ENCODE measurements at regions of chr4 and their contacts with region 1.

Region 1: DNA sequence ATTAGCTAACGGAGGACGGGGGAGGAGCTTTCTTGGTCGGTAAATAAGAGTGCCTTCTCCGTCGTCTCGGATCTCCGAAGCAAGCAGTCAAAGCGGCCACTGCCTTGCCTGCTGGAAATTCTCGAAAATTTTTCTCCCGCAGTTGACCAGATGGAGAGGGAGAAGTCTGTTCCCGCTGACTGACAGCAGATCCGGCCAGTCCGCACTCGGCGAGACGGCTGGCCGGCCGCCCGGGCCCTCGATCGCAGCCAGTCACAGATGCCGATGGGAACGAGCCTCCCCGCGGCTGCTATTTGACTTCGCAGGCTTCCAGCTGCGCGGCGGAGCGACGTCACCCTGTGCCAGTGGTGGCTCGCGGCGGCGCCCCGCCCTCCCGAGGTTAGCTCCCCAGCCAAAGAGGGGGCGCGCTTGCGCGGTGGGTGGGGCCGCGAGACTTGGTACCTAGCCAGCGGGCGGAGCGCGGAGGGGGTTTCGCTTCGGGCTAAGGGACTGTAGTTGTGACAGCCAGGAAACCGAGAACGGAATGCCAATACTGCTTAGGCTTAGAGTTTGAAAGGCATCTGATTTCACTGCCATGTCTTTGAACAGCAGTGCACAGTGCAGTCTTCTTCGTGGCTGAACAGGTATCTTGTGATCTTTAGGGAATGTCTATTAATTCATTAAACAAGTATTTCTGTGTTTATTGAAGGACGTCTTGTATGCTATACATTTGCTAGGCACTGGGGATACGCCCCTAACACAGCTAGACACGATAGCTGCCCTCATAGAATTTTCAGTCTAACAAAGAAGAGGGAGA is at the start of gene PPM1K:
- DNase-seq: peak; percentile 93
- ATAC-seq: peak; percentile 88
- H3K4me3 ChIP-seq: peak within 1 kb of the TSS; percentile 73
- H3K27ac ChIP-seq: peak within 1 kb of the TSS; percentile 98
- H3K4me1 ChIP-seq: 0 out of 2 replicates have a peak, but pooled peaks cover 5% of the 10 kb centered on the region
- H3K27me3 ChIP-seq: no peaks in the 10 kb centered on the region
- CTCF ChIP-seq: no peak
- EP300 ChIP-seq: 0 out of 4 replicates have a peak, but pooled peaks of 1 of the 2 experiments have one; percentile 4
- POLR2A ChIP-seq: no peak; the same call in none of the 2 replicates
- RAD21 ChIP-seq: no peak
- polyA plus RNA-seq, gene PPM1K: 25.3 to 25.4 TPM

Region 2: DNA sequence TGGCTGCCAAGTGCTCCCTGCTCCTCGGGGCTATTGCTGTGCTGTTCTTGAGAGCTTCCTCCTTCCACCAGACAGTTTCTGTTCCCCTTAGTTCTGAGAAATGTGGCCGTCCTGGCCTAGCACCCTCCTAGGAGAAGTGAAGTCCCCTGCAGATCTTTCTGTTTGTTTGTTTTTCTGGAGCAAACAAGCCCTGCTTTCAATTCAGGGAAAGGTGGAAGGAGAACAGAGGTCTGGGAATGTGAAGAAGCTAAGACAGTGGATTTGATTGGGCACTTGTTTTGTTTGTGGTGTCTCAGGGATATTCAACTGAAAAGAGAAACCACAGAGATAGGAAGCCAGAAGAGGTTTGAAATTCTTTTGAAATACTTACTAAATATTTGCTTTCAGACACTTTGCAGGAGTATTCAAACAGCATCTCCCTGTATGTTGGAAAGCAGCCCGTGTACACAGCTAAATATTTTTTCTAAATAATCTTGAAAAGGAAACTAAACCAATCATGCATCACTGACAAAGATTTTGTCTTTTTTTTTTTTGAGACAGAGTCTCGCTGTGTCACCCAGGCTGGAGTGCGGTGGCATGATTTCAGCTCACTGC is 36.2 kb after region 1 on chr4:
- CTCF ChIA-PET with region 1: interaction called, 4 read pairs
- POLR2A ChIA-PET with region 1: interaction called, 40 read pairs
- RAD21 ChIA-PET with region 1: interaction called, 42 read pairs
- SMC1A ChIA-PET with region 1: interaction called, 112 read pairs
- in situ Hi-C with region 1: no loop called
- intact Hi-C with region 1: loop called (anchors 1 kb)
- DNase-seq: peak; percentile 83
- ATAC-seq: peak; percentile 100
- H3K4me3 ChIP-seq: peak overlapping the region; percentile 53
- H3K27ac ChIP-seq: peak overlapping the region; percentile 93
- H3K4me1 ChIP-seq: peaks cover 17% of the 10 kb centered on the region
- H3K27me3 ChIP-seq: no peaks in the 10 kb centered on the region
- CTCF ChIP-seq: no peak
- EP300 ChIP-seq: peak in 1 of 2 experiments; percentile 80; a peak in 2 of 4 replicates
- POLR2A ChIP-seq: peak; percentile 49
- RAD21 ChIP-seq: no peak

Region 3: DNA sequence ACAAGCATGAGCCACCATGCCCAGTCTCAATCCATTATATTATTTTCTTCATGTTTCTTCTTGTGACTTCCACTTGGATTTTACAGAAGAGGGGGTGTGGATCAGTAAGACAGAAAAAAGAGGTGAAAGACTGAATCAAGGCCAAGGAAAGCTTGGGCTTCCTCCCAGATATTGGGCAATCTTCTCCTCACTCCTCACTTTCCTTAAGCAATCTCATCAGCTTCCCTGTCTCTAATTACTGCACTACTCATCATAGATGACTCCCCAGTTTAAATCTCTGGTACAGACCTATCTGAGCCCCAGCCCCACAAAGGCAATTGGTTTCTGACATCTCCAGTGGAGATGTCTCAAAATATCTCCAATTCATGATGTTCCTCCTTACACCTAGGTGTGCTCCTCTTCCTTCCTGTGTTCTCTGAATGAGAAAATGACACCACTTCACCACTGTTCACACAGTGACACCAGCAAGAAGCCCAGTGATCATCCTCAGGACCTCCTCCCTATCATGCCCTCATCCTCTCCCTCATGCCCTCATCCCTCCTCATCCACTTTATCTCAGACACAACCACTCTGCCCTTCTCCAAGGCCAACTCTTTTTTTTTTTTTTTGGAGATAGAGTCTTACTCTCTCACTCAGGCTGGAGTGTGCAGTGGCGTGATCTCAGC is 49.2 kb after region 1 on chr4:
- CTCF ChIA-PET with region 1: no interaction called
- POLR2A ChIA-PET with region 1: no interaction called
- RAD21 ChIA-PET with region 1: no interaction called
- SMC1A ChIA-PET with region 1: no interaction called
- in situ Hi-C with region 1: no loop called
- intact Hi-C with region 1: no loop called
- DNase-seq: no peak
- ATAC-seq: no peak
- H3K4me3 ChIP-seq: no peak overlapping the region
- H3K27ac ChIP-seq: no peak overlapping the region
- H3K4me1 ChIP-seq: no peaks in the 10 kb centered on the region
- H3K27me3 ChIP-seq: no peaks in the 10 kb centered on the region
- CTCF ChIP-seq: no peak
- EP300 ChIP-seq: no peak
- POLR2A ChIP-seq: no peak
- RAD21 ChIP-seq: no peak

Region 4: DNA sequence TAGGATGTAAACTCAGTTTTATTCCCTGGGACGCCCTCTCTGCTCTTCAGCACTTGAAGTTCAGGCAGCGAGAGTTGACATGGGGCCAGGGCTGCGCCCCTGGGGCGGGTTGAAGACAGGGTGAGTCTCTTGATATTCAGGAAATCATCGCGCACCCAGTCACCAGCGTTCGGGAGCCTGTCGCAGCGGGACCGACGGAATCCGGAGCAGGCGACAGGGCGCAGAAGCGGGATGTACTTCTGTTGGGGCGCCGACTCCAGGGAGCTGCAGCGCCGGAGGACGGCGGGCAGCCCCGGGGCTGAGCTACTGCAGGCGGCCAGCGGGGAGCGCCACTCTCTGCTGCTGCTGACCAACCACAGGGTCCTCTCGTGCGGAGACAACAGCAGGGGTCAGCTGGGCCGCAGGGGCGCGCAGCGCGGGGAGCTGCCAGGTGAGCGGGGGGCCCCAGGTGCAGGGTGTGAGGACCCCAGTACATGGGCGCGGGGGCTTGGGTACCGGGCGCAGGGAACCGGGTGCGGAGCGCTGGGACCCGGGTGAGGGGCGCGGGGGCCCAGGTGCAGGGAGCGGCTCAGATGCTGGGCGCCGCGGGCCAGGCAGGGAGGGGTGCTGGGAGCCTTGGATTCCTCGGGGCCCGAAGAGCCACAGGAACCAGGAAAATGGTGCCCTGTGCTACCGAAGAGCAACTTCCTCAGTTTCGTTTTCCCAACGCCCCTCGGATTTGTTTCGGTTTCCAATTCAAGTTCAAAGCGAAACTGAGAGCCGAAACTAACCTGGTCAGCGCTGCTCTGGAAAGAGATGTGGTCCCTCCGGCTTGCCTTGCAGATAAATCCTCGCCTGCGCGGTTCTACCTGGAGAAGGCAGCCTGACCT is 94.3 kb after region 1 on chr4 and contains the start of gene HERC6:
- CTCF ChIA-PET with region 1: interaction called, 9 read pairs
- POLR2A ChIA-PET with region 1: interaction called, 5 read pairs
- RAD21 ChIA-PET with region 1: interaction called, 6 read pairs
- SMC1A ChIA-PET with region 1: interaction called, 6 read pairs
- in situ Hi-C with region 1: no loop called
- intact Hi-C with region 1: loop called (anchors 1 kb)
- DNase-seq: peak; percentile 84
- ATAC-seq: peak; percentile 85
- H3K4me3 ChIP-seq: peak within 1 kb of the TSS; percentile 75
- H3K27ac ChIP-seq: peak within 1 kb of the TSS; percentile 82
- H3K4me1 ChIP-seq: peaks cover 24% of the 10 kb centered on the region
- H3K27me3 ChIP-seq: no peaks in the 10 kb centered on the region
- CTCF ChIP-seq: peak; percentile 69 to 83 (median 70)
- EP300 ChIP-seq: 0 out of 4 replicates have a peak, but pooled peaks of 1 of the 2 experiments have one; percentile 56
- POLR2A ChIP-seq: peak; percentile 78
- RAD21 ChIP-seq: peak; percentile 57
- polyA plus RNA-seq, gene HERC6: 1.7 to 2.2 TPM

Region 5: DNA sequence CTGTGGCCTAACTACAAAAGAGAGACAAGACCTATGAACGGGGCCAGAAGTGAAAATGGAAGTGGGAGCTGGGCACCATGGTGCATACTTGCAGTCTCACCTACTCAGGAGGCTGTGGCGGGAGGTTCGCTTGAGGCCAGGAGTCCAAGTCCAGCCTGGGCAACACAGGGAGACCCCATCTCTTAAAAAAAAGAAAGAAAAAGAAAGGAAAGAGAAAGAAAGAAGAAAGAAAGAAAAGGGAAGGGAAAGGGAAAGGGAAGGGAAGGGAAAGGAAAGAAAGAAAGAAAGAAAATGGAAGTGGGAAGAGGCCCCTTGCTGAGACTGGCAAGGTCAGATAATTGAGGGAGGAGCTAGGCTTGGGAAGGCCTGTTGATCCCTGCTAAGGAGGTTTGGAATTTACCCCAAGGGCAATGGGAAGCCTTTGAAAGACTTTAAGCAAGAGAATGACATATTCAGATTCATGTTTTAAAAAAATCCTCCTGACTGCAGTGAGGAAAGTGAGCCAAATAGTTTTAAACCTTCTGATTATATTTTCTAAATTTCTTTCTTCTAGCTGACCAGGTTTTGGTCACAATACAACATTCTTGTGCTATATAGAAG is 154.6 kb after region 1 on chr4:
- CTCF ChIA-PET with region 1: no interaction called
- POLR2A ChIA-PET with region 1: no interaction called
- RAD21 ChIA-PET with region 1: no interaction called
- SMC1A ChIA-PET with region 1: no interaction called
- in situ Hi-C with region 1: no loop called
- intact Hi-C with region 1: no loop called
- DNase-seq: no peak
- ATAC-seq: no peak
- H3K4me3 ChIP-seq: no peak overlapping the region
- H3K27ac ChIP-seq: no peak overlapping the region
- H3K4me1 ChIP-seq: no peaks in the 10 kb centered on the region
- H3K27me3 ChIP-seq: no peaks in the 10 kb centered on the region
- CTCF ChIP-seq: no peak
- EP300 ChIP-seq: no peak
- POLR2A ChIP-seq: no peak
- RAD21 ChIP-seq: no peak

Measured in GM12878 (cell line).